MCF 10A (cell line): ENCODE measurements at regions of chr1 and their contacts with region 1.

Region 1: DNA sequence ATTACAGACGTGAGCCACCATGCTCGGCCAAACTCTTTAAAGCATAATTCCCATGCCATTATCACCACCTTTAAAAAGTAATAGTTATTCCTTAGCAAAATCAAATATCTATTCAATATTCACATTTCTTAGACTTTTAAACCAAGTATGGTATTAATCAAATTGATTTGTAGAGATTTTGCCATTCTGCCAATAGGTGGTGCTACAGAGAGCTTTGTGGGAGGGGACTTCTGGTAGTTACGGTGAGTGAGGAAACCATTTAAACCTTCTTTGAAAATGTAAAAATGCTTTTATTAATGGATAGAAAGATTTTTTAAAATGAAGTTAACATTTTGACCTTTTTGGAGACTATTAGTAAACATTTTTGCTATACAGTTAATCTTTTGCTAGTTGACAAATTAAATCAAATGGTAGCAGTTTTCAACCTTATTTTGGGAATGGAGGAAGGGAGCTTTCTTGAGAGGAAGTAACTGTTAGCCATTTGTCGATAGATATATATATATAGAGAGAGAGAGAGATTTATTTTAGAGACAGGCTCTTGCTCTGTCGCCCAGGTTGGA is 19.3 kb downstream of the IARS2 start:
- DNase-seq: peak; percentile 78
- H3K4me3 Mint-ChIP-seq: no peak overlapping the region
- H3K27ac Mint-ChIP-seq: no peak overlapping the region
- H3K4me1 Mint-ChIP-seq: no peaks in the 10 kb centered on the region
- H3K27me3 Mint-ChIP-seq: no peaks in the 10 kb centered on the region
- CTCF ChIP-seq: peak; percentile 69

Region 2: DNA sequence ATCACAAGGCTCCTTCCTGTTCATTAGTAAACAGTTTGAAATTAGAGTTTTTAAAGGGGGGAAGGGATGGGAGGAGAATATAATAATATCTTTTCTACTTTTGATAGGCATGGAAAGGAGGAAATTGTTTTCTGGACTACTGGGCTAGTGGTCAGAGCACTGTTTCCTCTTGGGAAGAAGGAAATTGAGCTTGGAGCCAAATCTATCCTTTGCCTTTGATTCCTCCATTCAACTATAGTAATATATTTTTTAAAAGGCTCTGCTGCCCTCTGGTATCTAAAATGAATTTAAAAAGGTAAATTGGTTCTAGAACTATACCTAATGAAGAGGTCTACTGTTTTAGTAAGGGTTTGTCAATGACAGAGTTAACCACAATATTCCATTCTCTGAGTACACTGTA is 13.4 kb before region 1 on chr1:
- CTCF ChIA-PET with region 1: interaction called, 14 read pairs
- POLR2A ChIA-PET with region 1: interaction called, 16 read pairs
- intact Hi-C with region 1: no loop called
- DNase-seq: no peak
- H3K4me3 Mint-ChIP-seq: no peak overlapping the region
- H3K27ac Mint-ChIP-seq: no peak overlapping the region
- H3K4me1 Mint-ChIP-seq: peaks cover 18% of the 10 kb centered on the region
- H3K27me3 Mint-ChIP-seq: no peaks in the 10 kb centered on the region
- CTCF ChIP-seq: no peak

Region 3: DNA sequence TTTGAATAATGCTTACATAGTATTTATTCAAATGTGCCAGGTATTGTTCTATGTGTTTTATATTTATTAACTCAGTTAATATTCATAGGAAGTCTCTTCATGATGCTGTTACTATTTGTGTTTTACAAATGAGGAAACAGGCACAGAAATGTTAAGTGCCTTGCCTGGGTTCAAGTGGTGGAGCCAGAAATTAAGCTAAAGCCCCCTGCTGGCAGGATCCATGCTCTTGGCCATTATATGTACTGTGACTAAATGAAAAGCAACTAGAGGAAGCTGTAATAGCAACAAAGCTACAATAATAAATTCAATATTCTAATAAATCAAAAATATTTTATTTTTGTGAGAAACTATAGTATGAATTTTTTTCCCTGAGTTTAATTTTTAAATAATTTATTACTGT is 10.7 kb after region 1 on chr1:
- CTCF ChIA-PET with region 1: interaction called, 16 read pairs
- POLR2A ChIA-PET with region 1: interaction called, 6 read pairs
- intact Hi-C with region 1: no loop called
- DNase-seq: peak; percentile 43
- H3K4me3 Mint-ChIP-seq: no peak overlapping the region
- H3K27ac Mint-ChIP-seq: peak overlapping the region; percentile 5
- H3K4me1 Mint-ChIP-seq: peaks cover 10% of the 10 kb centered on the region
- H3K27me3 Mint-ChIP-seq: no peaks in the 10 kb centered on the region
- CTCF ChIP-seq: peak; percentile 39

Region 4: GRCh38 chr1:220363196-220363837 is 250.1 kb after region 1 on chr1:
- CTCF ChIA-PET with region 1: no interaction called
- POLR2A ChIA-PET with region 1: no interaction called
- intact Hi-C with region 1: no loop called
- DNase-seq: peak; percentile 39
- H3K4me3 Mint-ChIP-seq: no peak overlapping the region
- H3K27ac Mint-ChIP-seq: no peak overlapping the region
- H3K4me1 Mint-ChIP-seq: peaks cover 6% of the 10 kb centered on the region
- H3K27me3 Mint-ChIP-seq: no peaks in the 10 kb centered on the region
- CTCF ChIP-seq: no peak

Region 5: GRCh38 chr1:220378571-220379302 is 265.5 kb after region 1 on chr1:
- CTCF ChIA-PET with region 1: no interaction called
- POLR2A ChIA-PET with region 1: no interaction called
- intact Hi-C with region 1: no loop called
- DNase-seq: no peak
- H3K4me3 Mint-ChIP-seq: no peak overlapping the region
- H3K27ac Mint-ChIP-seq: no peak overlapping the region
- H3K4me1 Mint-ChIP-seq: no peaks in the 10 kb centered on the region
- H3K27me3 Mint-ChIP-seq: no peaks in the 10 kb centered on the region
- CTCF ChIP-seq: no peak